ENCODE measurements at regions of chr1 and their contacts with region 1.

Region 1: DNA sequence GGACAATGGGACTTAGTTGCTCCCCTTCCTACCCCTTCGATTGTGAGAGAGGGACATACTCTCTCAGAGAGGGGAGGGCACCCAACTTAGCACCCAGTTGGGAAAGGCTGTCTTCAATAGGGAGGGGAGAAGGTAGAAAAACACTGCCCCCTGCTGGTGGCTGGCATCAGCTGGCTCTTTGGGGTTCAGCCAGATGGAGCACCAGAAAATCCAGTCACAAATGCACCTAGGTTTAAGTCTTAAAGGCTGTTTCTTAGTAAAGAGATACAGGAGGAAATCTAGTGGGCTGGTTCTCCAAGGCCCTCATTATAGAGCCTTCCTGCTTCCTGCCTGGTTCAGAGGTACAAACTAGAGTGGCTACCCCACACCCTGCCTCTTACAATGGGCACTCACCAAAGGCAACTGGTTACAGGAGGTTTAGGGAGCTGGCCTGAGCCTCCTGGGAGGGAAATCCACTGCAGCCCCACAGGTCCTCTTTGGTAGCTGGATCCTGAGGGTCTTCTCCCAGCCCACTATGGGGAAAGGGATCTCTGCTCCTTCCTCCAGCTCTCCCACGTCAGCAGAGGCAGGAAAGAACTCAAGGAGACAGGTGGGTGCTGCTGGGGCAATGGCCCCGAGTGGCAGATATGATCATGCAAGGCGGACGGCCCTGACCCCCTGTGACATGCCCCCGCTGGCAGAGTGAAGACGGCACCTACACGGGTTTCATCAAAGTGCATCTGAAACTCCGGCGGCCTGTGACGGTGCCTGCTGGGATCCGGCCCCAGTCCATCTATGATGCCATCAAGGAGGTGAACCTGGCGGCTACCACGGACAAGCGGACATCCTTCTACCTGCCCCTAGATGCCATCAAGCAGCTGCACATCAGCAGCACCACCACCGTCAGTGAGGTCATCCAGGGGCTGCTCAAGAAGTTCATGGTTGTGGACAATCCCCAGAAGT is 28.3 kb downstream of the EIF2D start:
- DNase-seq: peak; percentile 95
- H3K4me3 Mint-ChIP-seq: peak overlapping the region; percentile 68
- H3K27ac Mint-ChIP-seq: peak overlapping the region; percentile 100
- H3K4me1 Mint-ChIP-seq: peaks cover 94% of the 10 kb centered on the region
- H3K27me3 Mint-ChIP-seq: no peaks in the 10 kb centered on the region

Region 2: GRCh38 chr1:205321164-205321958 is 1262.6 kb before region 1 on chr1 and contains the start of gene NUAK2:
- CTCF ChIA-PET with region 1: no interaction called
- intact Hi-C with region 1: loop called (anchors 5 kb)
- DNase-seq: peak; percentile 90
- H3K4me3 Mint-ChIP-seq: peak within 1 kb of the TSS; percentile 98
- H3K27ac Mint-ChIP-seq: peak within 1 kb of the TSS; percentile 93
- H3K4me1 Mint-ChIP-seq: peaks cover 50% of the 10 kb centered on the region
- H3K27me3 Mint-ChIP-seq: no peaks in the 10 kb centered on the region
- total RNA-seq, gene NUAK2: 11.2 to 12.2 TPM

Region 3: GRCh38 chr1:206469933-206470691 is 113.9 kb before region 1 on chr1 and contains the start of gene IKBKE:
- CTCF ChIA-PET with region 1: interaction called, 12 read pairs
- intact Hi-C with region 1: no loop called
- DNase-seq: peak; percentile 66
- H3K4me3 Mint-ChIP-seq: peak within 1 kb of the TSS; percentile 80
- H3K27ac Mint-ChIP-seq: peak within 1 kb of the TSS; percentile 89
- H3K4me1 Mint-ChIP-seq: peaks cover 89% of the 10 kb centered on the region
- H3K27me3 Mint-ChIP-seq: no peaks in the 10 kb centered on the region
- total RNA-seq, gene IKBKE: 7.0 to 8.6 TPM

Region 4: GRCh38 chr1:206507284-206508129 is 76.5 kb before region 1 on chr1 and contains the start of gene RASSF5:
- CTCF ChIA-PET with region 1: interaction called, 37 read pairs
- intact Hi-C with region 1: loop called (anchors 1 kb)
- DNase-seq: peak; percentile 92
- H3K4me3 Mint-ChIP-seq: peak within 1 kb of the TSS; percentile 74
- H3K27ac Mint-ChIP-seq: peak within 1 kb of the TSS; percentile 55
- H3K4me1 Mint-ChIP-seq: peaks cover 45% of the 10 kb centered on the region
- H3K27me3 Mint-ChIP-seq: peaks cover 22% of the 10 kb centered on the region
- total RNA-seq, gene RASSF5: 257 to 258 TPM

Region 5: DNA sequence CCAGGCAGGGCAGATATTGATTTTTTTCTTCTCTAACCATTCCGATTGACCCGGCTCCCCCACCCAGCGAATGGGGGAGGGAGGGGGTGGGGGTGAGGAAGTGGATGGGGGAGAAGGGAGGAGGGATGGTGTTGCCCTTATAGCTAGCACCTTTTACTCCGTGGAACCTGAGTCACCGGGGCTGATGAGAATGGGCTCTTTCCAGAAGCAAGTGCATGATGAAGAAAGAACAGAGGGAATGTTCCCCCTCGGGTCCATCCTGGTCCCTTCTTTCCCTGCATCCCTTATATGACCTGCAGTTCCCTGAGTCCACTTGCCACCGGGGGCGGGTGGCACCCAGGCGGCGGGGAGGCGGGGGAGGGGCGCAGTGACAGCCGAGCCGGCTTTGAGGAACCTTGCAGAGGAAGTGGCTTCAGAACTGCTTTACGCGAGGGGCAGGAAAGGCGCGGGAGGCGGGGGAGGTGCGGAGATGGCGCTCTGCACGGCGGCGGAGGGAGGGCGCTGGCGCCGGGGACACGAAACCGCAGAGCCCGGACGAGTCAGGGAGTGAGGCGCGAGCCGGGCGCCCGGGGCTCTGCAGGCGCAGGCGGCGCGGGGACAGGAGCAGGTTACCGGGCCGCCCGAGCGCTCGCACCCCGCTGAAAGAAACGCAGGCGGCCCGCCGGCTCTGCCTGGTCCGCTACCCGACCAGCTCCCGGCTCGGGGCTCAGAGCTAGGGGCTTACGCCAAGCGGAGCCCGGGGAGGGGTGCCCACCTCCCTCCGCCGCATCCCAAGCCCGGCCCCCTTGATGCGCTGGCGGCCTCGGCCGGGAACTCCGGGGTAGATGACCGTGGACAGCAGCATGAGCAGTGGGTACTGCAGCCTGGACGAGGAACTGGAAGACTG is 27.0 kb before region 1 on chr1:
- CTCF ChIA-PET with region 1: interaction called, 511 read pairs
- intact Hi-C with region 1: loop called (anchors 1 kb)
- DNase-seq: peak; percentile 92
- H3K4me3 Mint-ChIP-seq: peak overlapping the region; percentile 96
- H3K27ac Mint-ChIP-seq: peak overlapping the region; percentile 100
- H3K4me1 Mint-ChIP-seq: peaks cover 61% of the 10 kb centered on the region
- H3K27me3 Mint-ChIP-seq: no peaks in the 10 kb centered on the region

Region 6: GRCh38 chr1:206925106-206925736 is 341.2 kb after region 1 on chr1:
- CTCF ChIA-PET with region 1: no interaction called
- intact Hi-C with region 1: loop called (anchors 2 kb)
- DNase-seq: peak; percentile 78
- H3K4me3 Mint-ChIP-seq: no peak overlapping the region
- H3K27ac Mint-ChIP-seq: no peak overlapping the region
- H3K4me1 Mint-ChIP-seq: peaks cover 24% of the 10 kb centered on the region
- H3K27me3 Mint-ChIP-seq: no peaks in the 10 kb centered on the region